ENCODE measurements at regions of chr20 and their contacts with region 1.

Region 1: DNA sequence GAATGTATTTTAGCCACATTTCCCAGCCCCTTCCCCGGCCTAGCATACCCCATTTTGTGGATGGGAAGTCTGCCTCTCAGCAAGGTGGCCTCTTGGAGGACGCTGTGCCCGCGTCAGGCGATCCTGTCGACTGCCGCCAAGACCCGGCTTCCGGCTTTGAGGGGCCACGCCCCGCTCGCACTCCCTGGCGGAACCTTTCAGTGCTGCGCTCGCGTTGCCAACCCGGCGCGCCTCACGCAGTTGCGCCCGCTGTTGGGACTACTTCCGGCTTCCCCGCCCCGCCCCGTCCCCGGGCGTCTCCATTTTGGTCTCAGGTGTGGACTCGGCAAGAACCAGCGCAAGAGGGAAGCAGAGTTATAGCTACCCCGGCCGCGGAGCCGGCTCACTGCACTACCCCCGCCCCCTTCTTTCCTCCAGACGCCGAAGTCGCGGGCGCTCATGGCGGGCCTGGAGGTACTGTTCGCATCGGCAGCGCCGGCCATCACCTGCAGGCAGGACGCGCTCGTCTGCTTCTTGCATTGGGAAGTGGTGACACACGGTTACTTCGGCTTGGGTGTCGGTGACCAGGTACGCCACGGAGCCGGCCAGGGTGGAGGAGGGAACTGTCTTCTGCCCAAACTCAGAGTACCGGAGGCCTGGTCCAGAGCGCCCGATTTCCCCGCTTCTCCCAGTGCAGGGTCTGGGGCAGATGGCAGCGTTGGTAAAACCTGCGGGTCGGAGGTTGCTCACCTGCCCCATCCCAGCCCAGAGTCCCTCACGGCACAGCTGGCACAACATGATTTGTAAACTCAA is at the start of gene PSMF1:
- DNase-seq: peak; percentile 97
- total RNA-seq, gene PSMF1: 119 TPM

Region 2: DNA sequence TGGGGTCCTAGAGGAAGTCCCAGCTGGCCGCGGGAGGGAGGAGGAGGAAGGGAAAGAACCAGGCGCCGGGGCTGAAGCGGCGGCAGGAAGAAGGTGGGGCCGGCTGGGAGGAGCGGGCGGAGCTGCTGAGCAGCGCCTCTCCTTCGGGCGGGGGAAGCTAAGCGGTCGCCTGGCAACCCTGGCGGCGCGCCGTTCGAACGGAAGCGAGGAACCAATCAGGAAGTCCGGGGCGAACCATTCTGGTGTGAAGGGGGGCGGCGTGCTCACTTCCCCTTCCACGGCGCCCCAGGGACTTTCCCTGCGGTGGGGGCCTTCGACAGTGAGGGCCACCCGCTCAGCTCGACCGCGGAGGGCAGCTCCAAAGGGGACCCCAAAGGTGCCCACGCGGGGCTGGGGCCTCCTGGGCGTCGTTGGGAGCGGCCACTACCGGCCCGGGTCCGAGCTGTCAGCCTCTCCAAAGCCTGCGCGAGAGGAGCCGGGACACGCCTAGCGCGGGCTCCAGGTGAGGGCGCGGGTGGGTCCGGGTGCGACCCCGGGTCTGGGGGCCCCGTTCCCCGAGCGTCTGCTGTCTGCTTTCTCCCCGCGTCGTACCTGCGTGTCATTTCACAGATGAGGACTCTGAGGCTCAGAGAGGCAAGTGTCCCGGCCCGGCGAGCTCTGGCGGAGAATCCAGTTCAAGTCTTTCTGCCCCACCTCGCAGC is 284.9 kb before region 1 on chr20 and contains the start of gene FAM110A:
- intact Hi-C with region 1: loop called (anchors 10 kb)
- DNase-seq: peak; percentile 99
- total RNA-seq, gene FAM110A: 1.8 TPM

Region 3: GRCh38 chr20:1212607-1213396 is 94.3 kb after region 1 on chr20:
- intact Hi-C with region 1: loop called (anchors 10 kb)
- DNase-seq: peak; percentile 84

Region 4: DNA sequence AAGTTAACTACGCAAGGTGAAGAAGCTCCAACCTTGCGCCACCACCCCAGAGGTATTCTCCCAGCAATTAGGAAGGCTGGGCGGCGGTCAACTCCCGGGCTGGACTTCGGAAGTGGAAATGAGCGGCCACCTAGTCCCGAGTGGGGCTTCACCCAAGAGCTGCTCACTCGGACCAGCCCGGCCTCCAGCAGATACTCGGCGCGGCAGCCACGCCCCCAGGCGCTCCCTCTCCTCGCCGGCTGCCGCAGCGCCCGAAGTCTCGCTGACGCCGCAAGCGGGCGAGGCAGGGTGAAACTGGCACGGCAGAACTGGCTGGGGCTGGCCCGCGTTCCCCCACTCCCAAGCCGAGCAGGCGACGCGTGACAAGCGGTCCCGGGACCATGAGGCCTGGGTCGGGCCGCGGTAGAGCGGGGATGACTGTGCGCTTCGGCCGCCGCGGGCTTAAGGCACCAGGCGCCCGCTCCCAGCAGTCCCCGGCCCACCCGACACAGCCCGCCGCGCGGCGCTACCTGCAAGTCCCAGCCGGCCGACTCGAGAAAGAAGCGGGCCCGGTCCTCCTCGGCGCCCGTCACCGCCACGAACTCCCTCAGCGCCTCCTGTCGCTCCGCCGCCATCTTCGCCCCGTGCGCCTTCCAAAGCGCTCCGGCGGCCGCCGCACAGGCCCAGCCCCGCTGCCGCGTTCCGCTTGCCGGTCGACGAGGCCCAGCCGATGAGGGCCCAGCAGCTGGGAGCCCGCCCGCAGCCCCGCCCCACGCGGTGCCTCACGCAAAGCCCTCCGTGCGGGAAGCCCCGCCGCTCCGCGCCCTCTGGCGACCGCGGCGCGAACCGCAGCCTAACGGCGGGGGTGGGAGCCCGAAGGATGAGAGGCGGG is 347.9 kb after region 1 on chr20 and contains the start of gene NSFL1C:
- intact Hi-C with region 1: loop called (anchors 2 kb)
- DNase-seq: peak; percentile 98
- total RNA-seq, gene NSFL1C: 64.0 TPM